K562 (cell line): ENCODE measurements at regions of chr10 and their contacts with region 1.

Region 1: DNA sequence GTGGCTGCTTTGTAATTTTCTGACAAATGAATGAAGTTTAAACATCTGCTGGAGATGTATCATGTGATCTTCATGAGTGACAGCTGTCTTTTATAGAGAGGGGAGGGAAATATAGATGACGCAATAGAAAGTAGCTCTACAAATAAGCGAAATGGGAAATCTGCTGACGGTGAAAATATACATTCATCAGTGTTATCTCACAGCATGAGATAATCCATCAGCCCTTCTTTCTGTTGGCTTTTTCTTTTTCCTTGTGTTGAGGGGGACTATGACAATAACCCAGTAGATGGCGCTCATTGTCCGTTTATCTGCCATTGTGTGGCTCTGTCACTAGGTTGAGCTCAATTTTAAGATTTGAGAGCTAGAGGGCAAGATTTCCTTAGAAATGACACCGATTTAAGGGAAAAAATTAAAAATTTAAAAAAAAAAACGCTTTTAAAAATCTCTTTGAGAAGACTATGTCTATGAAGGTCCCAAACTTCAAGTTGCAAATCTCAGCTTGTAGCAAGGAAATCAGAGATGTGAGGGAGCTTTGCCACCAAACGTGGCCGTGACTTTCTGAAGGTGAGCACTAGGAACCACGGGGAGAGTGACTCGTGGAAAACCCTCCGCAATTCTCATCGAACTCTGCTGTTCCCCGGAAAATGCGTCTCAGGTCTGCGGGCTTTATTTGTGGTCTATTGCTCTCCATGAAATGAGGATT is 114.6 kb upstream of the SFMBT2 start:
- DNase-seq: peak; percentile 67 to 78 (median 76)
- ATAC-seq: peak; percentile 97
- H3K4me3 ChIP-seq: no peak overlapping the region
- H3K27ac ChIP-seq: no peak overlapping the region
- H3K4me1 ChIP-seq: no peaks in the 10 kb centered on the region
- H3K27me3 ChIP-seq: peaks cover 0 to 11% of the 10 kb centered on the region in 2 experiments; a peak in 4 of 5 replicates
- CTCF ChIP-seq: peak; percentile 76 to 98 (median 96)
- EP300 ChIP-seq: no peak
- POLR2A ChIP-seq: no peak
- RAD21 ChIP-seq: peak; percentile 90 to 96

Region 2: DNA sequence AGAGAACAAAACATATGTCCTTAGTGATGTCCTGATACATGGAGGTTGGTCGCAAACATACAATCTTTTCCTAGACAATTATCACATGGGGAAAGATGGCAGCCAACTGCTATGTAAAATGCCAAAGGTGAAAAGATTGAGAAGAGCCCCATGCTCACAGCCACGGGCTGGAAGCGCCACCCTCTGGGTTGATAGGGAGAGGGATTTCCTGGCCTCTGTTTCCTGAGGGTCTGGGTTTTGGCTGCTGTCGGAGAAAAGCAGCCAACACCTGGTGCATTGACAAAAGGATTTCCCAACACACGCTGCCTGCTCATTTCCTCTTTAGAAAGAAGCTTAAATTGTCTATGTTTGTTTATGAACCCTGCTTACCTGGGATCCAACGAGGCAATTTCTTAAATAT is 97.5 kb after region 1 on chr10:
- CTCF ChIA-PET with region 1: no interaction called
- POLR2A ChIA-PET with region 1: no interaction called
- in situ Hi-C with region 1: no loop called
- intact Hi-C with region 1: loop called (anchors 5 kb)
- DNase-seq: peak in 2 of 4 experiments; percentile 10
- ATAC-seq: peak; percentile 73
- H3K4me3 ChIP-seq: no peak overlapping the region
- H3K27ac ChIP-seq: no peak overlapping the region
- H3K4me1 ChIP-seq: no peaks in the 10 kb centered on the region; a peak in 1 of 5 replicates
- H3K27me3 ChIP-seq: peaks cover 3 to 28% of the 10 kb centered on the region in 2 experiments; a peak in 3 of 5 replicates
- CTCF ChIP-seq: peak; percentile 37 to 48 (median 38); a peak in 4 of 6 replicates
- EP300 ChIP-seq: no peak
- POLR2A ChIP-seq: no peak
- RAD21 ChIP-seq: peak; percentile 60 to 61

Region 3: GRCh38 chr10:7687228-7687907 is 161.9 kb after region 1 on chr10:
- CTCF ChIA-PET with region 1: interaction called, 22 read pairs
- POLR2A ChIA-PET with region 1: no interaction called
- in situ Hi-C with region 1: loop called (anchors 10 kb)
- intact Hi-C with region 1: loop called (anchors 1 kb)
- DNase-seq: peak; percentile 67 to 89 (median 72)
- ATAC-seq: peak; percentile 100
- H3K4me3 ChIP-seq: no peak overlapping the region
- H3K27ac ChIP-seq: no peak overlapping the region
- H3K4me1 ChIP-seq: no peaks in the 10 kb centered on the region
- H3K27me3 ChIP-seq: no peaks in the 10 kb centered on the region
- CTCF ChIP-seq: peak; percentile 96 to 99 (median 99)
- EP300 ChIP-seq: peak; percentile 7; the same call in 1 of the 2 replicates
- POLR2A ChIP-seq: no peak
- RAD21 ChIP-seq: peak; percentile 88 to 92

Region 4: GRCh38 chr10:9209105-9209798 is 1683.8 kb after region 1 on chr10:
- CTCF ChIA-PET with region 1: interaction called, 4 read pairs
- POLR2A ChIA-PET with region 1: no interaction called
- in situ Hi-C with region 1: no loop called
- intact Hi-C with region 1: loop called (anchors 1 kb)
- DNase-seq: peak; percentile 39 to 67 (median 46)
- ATAC-seq: peak; percentile 76
- H3K4me3 ChIP-seq: no peak overlapping the region
- H3K27ac ChIP-seq: no peak overlapping the region
- H3K4me1 ChIP-seq: no peaks in the 10 kb centered on the region
- H3K27me3 ChIP-seq: no peaks in the 10 kb centered on the region
- CTCF ChIP-seq: peak; percentile 62 to 78 (median 76)
- EP300 ChIP-seq: no peak
- POLR2A ChIP-seq: no peak
- RAD21 ChIP-seq: peak; percentile 64 to 79

Region 5: DNA sequence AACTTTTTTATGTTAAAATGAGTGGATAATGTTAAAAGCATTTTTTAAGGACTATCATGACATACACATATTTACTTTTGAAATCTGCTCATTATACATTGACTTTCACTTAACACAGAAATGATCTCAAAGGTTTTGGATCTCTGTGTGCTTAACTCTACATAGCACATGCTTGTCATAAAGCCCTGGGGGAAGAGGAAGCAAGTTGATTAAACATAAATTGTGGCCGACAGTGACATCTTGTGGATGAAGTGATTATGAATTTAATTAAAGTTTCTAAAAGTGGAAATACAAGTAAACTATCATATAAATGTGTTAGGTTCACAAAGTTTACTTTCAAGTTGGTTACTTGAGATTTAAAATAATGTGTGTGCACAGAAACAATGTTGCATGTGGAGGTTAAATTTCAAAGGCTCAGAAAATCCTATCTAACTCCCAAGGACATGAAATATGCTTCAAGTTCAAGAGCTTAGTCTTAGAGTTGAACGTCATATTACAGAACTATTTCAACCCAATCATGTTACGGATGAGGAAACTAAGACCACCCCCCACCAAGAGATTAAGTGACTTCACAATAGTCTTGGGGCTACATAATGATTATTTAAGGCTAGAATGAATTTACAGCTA is 1776.8 kb after region 1 on chr10:
- CTCF ChIA-PET with region 1: interaction called, 19 read pairs
- POLR2A ChIA-PET with region 1: interaction called, 6 read pairs
- in situ Hi-C with region 1: loop called (anchors 10 kb)
- intact Hi-C with region 1: loop called (anchors 2 kb)
- DNase-seq: peak; percentile 8 to 52 (median 46)
- ATAC-seq: peak; percentile 58; the same call in 1 of the 3 replicates
- H3K4me3 ChIP-seq: no peak overlapping the region
- H3K27ac ChIP-seq: no peak overlapping the region
- H3K4me1 ChIP-seq: no peaks in the 10 kb centered on the region
- H3K27me3 ChIP-seq: no peaks in the 10 kb centered on the region
- CTCF ChIP-seq: peak; percentile 16 to 57 (median 19); a peak in 3 of 6 replicates
- EP300 ChIP-seq: no peak
- POLR2A ChIP-seq: no peak
- RAD21 ChIP-seq: peak; percentile 61 to 68